B cell (primary cell): ENCODE measurements at regions of chr12 and their contacts with region 1.

Region 1: DNA sequence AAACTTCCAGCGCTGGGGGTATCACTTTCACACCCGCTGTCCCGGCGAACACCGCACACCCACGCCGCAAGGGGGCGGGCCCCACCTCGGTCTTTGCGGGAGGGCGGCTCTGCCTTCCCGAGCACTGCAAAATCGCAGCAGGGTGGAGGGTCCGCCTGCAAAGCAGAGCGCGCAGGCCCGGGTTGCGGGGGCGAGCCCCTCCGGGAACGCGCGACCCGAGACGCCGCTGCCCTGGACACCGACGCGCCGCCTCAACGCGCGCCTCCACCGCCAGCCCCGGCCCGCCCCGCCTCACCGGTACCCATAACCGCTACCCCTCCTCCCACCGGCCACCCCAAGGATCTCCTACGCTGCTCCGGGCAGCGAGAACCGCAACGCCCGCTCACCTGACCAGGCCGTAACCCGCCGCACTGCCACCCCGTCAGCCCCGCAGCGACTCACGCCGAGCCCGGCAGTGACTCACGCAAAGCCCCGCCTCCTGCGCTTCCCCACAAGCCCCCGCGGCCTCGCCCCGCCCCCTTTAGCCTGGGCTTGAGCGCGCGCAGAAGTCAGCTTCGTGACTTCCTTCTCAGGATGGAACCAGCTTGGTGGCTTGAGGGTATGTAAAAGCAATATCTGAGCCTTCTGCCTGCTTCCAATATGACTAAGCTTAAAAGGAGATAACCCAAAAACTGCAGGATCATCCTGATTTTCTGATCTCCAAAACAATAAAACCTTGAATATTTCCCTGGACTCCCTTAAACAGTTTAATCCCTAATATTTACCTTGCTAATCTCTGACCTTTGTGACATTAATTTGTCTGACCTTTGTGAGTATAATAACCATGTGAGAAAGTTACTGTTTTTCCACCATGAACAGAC is at the start of gene RPAP3:
- DNase-seq: peak; percentile 95
- ATAC-seq: peak; percentile 90
- H3K4me3 ChIP-seq: peak within 1 kb of the TSS; percentile 62 to 98 (median 83)
- H3K4me3 Mint-ChIP-seq: peak within 1 kb of the TSS; percentile 93
- H3K27ac ChIP-seq: peak within 1 kb of the TSS; percentile 88
- H3K27ac Mint-ChIP-seq: peak within 1 kb of the TSS; percentile 94
- H3K4me1 ChIP-seq: peaks cover 59 to 61% of the 10 kb centered on the region in 2 donors
- H3K4me1 Mint-ChIP-seq: peaks cover 71% of the 10 kb centered on the region
- H3K27me3 ChIP-seq: no peaks in the 10 kb centered on the region
- H3K27me3 Mint-ChIP-seq: no peaks in the 10 kb centered on the region
- CTCF ChIP-seq: peak; percentile 81
- total RNA-seq, gene RPAP3: 47.2 and 49.4 TPM in 2 replicates

Region 2: GRCh38 chr12:47190271-47190750 is 515.5 kb before region 1 on chr12:
- CTCF ChIA-PET with region 1: no interaction called
- POLR2A ChIA-PET with region 1: no interaction called
- intact Hi-C with region 1: loop called (anchors 10 kb)
- DNase-seq: no peak
- ATAC-seq: no peak
- H3K4me3 ChIP-seq: no peak overlapping the region
- H3K4me3 Mint-ChIP-seq: peak overlapping the region; percentile 30
- H3K27ac ChIP-seq: no peak overlapping the region
- H3K27ac Mint-ChIP-seq: peak overlapping the region; percentile 23
- H3K4me1 ChIP-seq: peaks cover 62 to 67% of the 10 kb centered on the region in 2 donors
- H3K4me1 Mint-ChIP-seq: peaks cover 64% of the 10 kb centered on the region
- H3K27me3 ChIP-seq: no peaks in the 10 kb centered on the region
- H3K27me3 Mint-ChIP-seq: no peaks in the 10 kb centered on the region
- CTCF ChIP-seq: no peak

Region 3: DNA sequence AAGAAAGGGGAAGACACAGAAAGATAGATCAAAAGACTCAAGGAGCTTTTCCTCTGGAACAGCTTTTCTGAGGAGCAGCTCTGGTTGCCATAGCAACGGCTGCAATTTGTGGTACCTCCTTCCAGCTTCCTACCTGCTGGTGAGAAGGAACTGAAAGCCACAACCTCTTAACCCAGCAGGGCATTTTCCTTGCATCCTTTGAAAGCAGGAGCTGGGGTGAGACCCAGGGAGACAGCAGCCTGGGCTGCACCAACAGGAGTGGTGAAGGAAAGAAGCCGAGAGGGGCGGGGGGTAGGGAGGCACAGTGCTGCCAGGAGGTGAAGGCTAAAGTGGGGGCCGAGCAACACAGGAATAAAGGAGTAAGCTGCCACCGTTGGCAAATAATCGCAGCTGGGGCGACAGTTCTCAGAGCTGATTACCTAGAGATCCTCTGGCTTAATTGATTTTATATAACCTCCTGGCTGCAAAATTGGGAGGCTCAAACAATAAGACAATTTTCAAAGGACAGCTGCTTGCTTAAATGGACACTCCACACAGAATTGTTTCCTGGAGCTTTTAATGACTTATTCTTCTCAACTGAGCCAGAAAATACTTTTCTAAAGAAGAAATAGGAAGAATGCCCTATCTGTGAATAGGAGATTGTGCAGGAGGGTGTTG is 129.4 kb before region 1 on chr12:
- CTCF ChIA-PET with region 1: no interaction called
- POLR2A ChIA-PET with region 1: no interaction called
- intact Hi-C with region 1: no loop called
- DNase-seq: no peak
- ATAC-seq: no peak
- H3K4me3 ChIP-seq: no peak overlapping the region
- H3K4me3 Mint-ChIP-seq: no peak overlapping the region
- H3K27ac ChIP-seq: no peak overlapping the region
- H3K27ac Mint-ChIP-seq: no peak overlapping the region
- H3K4me1 ChIP-seq: no peaks in the 10 kb centered on the region
- H3K4me1 Mint-ChIP-seq: no peaks in the 10 kb centered on the region
- H3K27me3 ChIP-seq: peaks cover 0 to 4% (median 0%) of the 10 kb centered on the region in 4 experiments
- H3K27me3 Mint-ChIP-seq: peaks cover 8% of the 10 kb centered on the region
- CTCF ChIP-seq: no peak

Region 4: DNA sequence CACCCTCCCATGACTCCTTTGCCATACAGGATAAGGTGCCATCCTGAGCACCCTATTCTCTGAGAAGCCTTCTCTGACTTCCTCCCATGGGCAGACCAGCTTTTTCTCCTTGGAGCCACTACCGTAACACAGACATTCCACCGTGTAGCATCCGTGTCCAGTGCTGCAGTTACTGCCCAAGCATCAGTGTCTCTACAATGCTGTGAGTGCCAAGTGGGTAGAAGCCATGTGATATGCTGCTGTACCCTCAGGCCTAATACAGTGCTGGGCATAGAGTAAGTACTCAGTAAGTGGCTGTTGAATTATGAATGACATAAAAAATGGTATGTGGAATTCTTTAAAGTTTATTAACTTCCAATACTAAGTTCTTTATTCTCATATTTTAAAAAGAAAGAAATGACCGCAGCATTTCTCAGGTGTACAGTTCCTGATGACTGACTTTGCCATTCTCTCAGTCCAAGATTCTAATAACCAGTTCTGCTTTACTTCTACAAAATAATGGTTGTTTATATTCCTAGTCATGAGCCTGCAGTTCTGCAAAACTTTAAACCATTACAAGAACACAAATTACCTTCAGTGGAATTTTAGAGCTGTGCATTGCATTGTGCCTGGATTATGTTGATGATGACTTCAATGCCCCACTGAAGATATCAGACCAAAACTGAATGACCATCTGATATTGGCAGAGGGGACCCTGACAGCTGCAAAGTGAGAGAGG is 118.7 kb before region 1 on chr12:
- CTCF ChIA-PET with region 1: no interaction called
- POLR2A ChIA-PET with region 1: no interaction called
- intact Hi-C with region 1: no loop called
- DNase-seq: no peak
- ATAC-seq: no peak
- H3K4me3 ChIP-seq: no peak overlapping the region
- H3K4me3 Mint-ChIP-seq: no peak overlapping the region
- H3K27ac ChIP-seq: no peak overlapping the region
- H3K27ac Mint-ChIP-seq: no peak overlapping the region
- H3K4me1 ChIP-seq: no peaks in the 10 kb centered on the region
- H3K4me1 Mint-ChIP-seq: peaks cover 12% of the 10 kb centered on the region
- H3K27me3 ChIP-seq: no peaks in the 10 kb centered on the region
- H3K27me3 Mint-ChIP-seq: peaks cover 13% of the 10 kb centered on the region
- CTCF ChIP-seq: no peak

Region 5: GRCh38 chr12:47758834-47759690 is 53.3 kb after region 1 on chr12 and contains the start of gene RAPGEF3:
- CTCF ChIA-PET with region 1: interaction called, 11 read pairs
- POLR2A ChIA-PET with region 1: no interaction called
- intact Hi-C with region 1: no loop called
- DNase-seq: peak; percentile 78
- ATAC-seq: peak; percentile 77
- H3K4me3 ChIP-seq: peak within 1 kb of the TSS; percentile 15 to 71 (median 67)
- H3K4me3 Mint-ChIP-seq: peak within 1 kb of the TSS; percentile 85
- H3K27ac ChIP-seq: peak within 1 kb of the TSS in 1 of 2 donors; percentile 23
- H3K27ac Mint-ChIP-seq: peak within 1 kb of the TSS; percentile 50
- H3K4me1 ChIP-seq: peaks cover 52 to 66% of the 10 kb centered on the region in 2 donors
- H3K4me1 Mint-ChIP-seq: peaks cover 53% of the 10 kb centered on the region
- H3K27me3 ChIP-seq: no peaks in the 10 kb centered on the region
- H3K27me3 Mint-ChIP-seq: no peaks in the 10 kb centered on the region
- CTCF ChIP-seq: peak; percentile 70
- total RNA-seq, gene RAPGEF3: 5.2 and 5.4 TPM in 2 replicates

Region 6: GRCh38 chr12:47812797-47813510 is 107.2 kb after region 1 on chr12:
- CTCF ChIA-PET with region 1: interaction called, 4 read pairs
- POLR2A ChIA-PET with region 1: no interaction called
- intact Hi-C with region 1: loop called (anchors 1 kb)
- DNase-seq: peak; percentile 94
- ATAC-seq: peak; percentile 72
- H3K4me3 ChIP-seq: peak overlapping the region; percentile 53 to 68 (median 61)
- H3K4me3 Mint-ChIP-seq: peak overlapping the region; percentile 85
- H3K27ac ChIP-seq: peak overlapping the region; percentile 96 to 98
- H3K27ac Mint-ChIP-seq: peak overlapping the region; percentile 96
- H3K4me1 ChIP-seq: peaks cover 91 to 97% of the 10 kb centered on the region in 2 donors
- H3K4me1 Mint-ChIP-seq: peaks cover 94% of the 10 kb centered on the region
- H3K27me3 ChIP-seq: no peaks in the 10 kb centered on the region
- H3K27me3 Mint-ChIP-seq: no peaks in the 10 kb centered on the region
- CTCF ChIP-seq: no peak

Region 7: DNA sequence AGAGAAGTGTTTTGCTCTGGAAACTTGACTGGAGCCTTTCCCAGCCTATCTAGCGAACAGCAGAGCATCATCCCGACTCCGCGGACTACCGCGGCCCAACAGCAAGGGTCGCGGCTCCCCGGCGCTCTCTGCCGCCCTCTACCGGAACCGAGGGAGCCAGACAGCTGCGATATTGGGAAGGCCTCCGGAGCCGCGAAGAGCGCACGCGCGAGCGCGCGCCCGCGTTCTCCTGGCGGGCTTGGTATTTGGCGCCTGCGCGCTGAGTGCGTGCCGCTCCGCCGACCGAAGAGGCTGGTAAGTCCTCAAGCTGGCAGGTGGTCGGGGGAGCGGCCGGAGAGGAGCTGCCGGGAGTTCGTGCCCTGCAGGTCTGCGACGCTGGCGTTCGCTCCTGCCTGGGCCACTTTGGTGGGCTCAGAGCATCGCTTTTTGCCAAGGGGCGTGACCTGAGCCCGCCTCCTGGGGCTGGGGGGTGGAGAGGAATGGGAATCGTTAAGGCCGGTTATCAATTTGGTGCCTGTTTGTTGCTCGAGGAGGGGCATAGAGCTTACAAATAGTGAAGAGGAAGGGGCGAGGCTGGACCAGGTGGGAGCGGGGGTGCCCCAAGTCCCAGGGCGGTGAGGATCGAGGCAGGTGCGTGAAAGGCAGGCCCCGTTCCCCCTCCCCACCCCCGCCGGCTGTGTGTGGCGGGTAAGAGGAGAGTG is 257.7 kb after region 1 on chr12 and contains the start of gene TMEM106C:
- CTCF ChIA-PET with region 1: no interaction called
- POLR2A ChIA-PET with region 1: no interaction called
- intact Hi-C with region 1: loop called (anchors 1 kb)
- DNase-seq: peak; percentile 97
- ATAC-seq: peak; percentile 99
- H3K4me3 ChIP-seq: peak within 1 kb of the TSS; percentile 68 to 96 (median 75)
- H3K4me3 Mint-ChIP-seq: peak within 1 kb of the TSS; percentile 96
- H3K27ac ChIP-seq: peak within 1 kb of the TSS; percentile 17 to 67
- H3K27ac Mint-ChIP-seq: peak within 1 kb of the TSS; percentile 86
- H3K4me1 ChIP-seq: peaks cover 6 to 14% of the 10 kb centered on the region in 2 donors
- H3K4me1 Mint-ChIP-seq: peaks cover 25% of the 10 kb centered on the region
- H3K27me3 ChIP-seq: no peaks in the 10 kb centered on the region
- H3K27me3 Mint-ChIP-seq: peaks cover 16% of the 10 kb centered on the region
- CTCF ChIP-seq: peak; percentile 94
- total RNA-seq, gene TMEM106C: 32.9 and 37.5 TPM in 2 replicates

Region 8: DNA sequence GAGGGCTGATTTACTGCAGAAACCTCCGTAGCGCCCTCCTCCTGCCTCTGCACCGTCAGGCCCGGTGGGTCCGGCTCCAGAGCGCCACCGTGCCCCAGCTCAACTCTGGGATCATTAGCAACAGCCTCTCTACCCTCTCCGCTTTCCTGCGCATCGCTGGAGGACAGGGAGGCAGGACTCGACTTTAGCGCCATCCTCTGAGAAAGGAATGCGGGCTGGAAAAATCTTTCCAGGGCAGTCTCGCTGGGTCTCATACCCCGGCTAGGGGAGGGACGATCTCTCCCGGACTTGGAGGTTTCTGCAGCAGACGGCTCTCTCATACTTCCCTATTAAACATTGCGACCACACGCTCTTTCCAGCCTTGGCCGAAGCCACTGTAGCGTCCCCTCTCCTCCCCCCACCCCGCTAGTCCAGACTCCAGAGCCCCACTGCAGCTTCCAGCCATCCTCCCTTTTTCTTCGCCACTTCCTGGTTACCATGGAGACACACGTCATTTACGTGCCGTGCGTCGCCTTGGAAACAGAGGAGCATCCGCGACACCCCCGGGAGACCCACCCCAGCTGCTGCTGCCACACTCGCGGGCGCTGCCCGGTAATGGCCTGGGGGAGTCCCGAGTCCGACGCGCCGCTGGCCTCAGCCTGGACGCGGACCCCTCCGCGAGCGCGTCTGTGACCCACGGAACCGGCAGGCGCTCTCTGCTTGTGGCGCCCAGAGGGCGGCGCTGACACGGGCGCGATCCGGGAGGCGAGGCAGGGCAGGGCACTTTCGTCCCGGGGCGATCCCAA is 477.5 kb after region 1 on chr12 and contains the start of gene CCDC184:
- CTCF ChIA-PET with region 1: interaction called, 3 read pairs
- POLR2A ChIA-PET with region 1: no interaction called
- intact Hi-C with region 1: loop called (anchors 10 kb)
- DNase-seq: peak; percentile 89
- ATAC-seq: peak; percentile 75
- H3K4me3 ChIP-seq: peak within 1 kb of the TSS; percentile 69 to 90 (median 77)
- H3K4me3 Mint-ChIP-seq: peak within 1 kb of the TSS; percentile 98
- H3K27ac ChIP-seq: peak within 1 kb of the TSS in 1 of 2 donors; percentile 11
- H3K27ac Mint-ChIP-seq: peak within 1 kb of the TSS; percentile 84
- H3K4me1 ChIP-seq: peaks cover 27 to 29% of the 10 kb centered on the region in 2 donors
- H3K4me1 Mint-ChIP-seq: peaks cover 28% of the 10 kb centered on the region
- H3K27me3 ChIP-seq: peaks cover 0 to 38% (median 15%) of the 10 kb centered on the region in 4 experiments
- H3K27me3 Mint-ChIP-seq: peaks cover 37% of the 10 kb centered on the region
- CTCF ChIP-seq: peak; percentile 45
- total RNA-seq, gene CCDC184: 0.54 and 0.66 TPM in 2 replicates